ENCODE measurements at regions of chr4 and their contacts with region 1.

Region 1: GRCh38 chr4:171993247-171993646 is 180.0 kb downstream of the GALNTL6 start:
- DNase-seq: no peak
- H3K4me3 ChIP-seq: no peak overlapping the region
- H3K27ac ChIP-seq: no peak overlapping the region
- H3K4me1 ChIP-seq: no peaks in the 10 kb centered on the region
- H3K27me3 ChIP-seq: no peaks in the 10 kb centered on the region
- CTCF ChIP-seq: no peak
- EP300 ChIP-seq: no peak
- POLR2A ChIP-seq: no peak

Region 2: DNA sequence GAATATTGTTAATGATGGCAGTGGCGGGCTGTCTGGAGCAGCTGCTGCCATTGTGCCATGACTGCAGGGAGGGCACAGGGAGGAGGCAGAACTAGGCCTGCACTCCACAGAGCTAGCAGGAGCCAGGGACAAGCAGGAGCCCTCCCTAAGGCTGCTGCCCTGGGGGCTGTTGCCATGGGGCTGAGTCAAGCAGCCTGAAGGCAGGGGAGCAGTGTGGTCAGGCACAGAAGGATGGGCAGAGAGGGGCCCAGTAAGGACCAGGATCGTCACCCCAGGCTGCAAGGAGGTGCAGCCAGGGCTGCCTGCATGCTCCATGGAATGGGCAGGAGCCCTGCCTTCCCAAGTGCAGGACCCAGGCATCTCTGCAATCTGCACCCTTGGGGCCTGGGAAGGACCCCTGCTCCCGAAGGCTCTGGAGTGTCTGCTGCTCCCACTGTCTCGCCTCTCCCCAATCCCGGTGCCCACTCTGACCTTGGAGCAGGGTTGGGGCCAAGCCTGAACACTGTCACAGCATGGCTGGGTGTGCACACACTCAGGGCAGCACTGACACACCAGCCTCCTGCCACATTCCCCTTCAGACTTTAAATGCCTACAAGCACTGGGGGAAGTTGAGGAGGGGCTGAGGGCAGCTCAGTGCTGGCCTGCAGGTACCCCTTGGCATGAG is 278.3 kb before region 1 on chr4:
- in situ Hi-C with region 1: no loop called
- intact Hi-C with region 1: no loop called
- DNase-seq: no peak
- H3K4me3 ChIP-seq: no peak overlapping the region
- H3K27ac ChIP-seq: no peak overlapping the region
- H3K4me1 ChIP-seq: no peaks in the 10 kb centered on the region
- H3K27me3 ChIP-seq: no peaks in the 10 kb centered on the region
- CTCF ChIP-seq: no peak
- EP300 ChIP-seq: no peak
- POLR2A ChIP-seq: no peak

Region 3: GRCh38 chr4:171924746-171925376 is 68.4 kb before region 1 on chr4:
- in situ Hi-C with region 1: no loop called
- intact Hi-C with region 1: loop called (anchors 2 kb)
- DNase-seq: no peak
- H3K4me3 ChIP-seq: no peak overlapping the region
- H3K27ac ChIP-seq: no peak overlapping the region
- H3K4me1 ChIP-seq: no peaks in the 10 kb centered on the region
- H3K27me3 ChIP-seq: no peaks in the 10 kb centered on the region
- CTCF ChIP-seq: no peak
- EP300 ChIP-seq: no peak
- POLR2A ChIP-seq: no peak

Region 4: DNA sequence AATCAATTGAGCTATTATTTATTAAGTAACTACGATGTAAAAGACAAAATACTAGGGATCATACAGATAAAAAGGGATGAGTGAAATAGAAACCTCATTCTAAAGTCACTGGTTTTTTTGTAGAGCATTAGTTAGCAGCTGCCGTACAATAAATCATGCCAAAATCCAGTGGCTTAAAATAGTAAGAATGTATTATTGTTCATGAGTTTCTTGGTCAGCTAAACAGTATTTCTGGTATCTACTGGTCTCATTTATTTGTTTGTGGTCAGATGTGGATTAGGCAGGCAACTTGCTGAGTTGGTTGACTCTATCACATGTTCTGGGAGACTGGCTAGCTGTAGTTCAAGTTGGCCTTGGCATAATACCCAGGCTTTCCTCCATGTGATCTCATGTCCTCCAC is 487.2 kb after region 1 on chr4:
- in situ Hi-C with region 1: no loop called
- intact Hi-C with region 1: no loop called
- DNase-seq: no peak
- H3K4me3 ChIP-seq: no peak overlapping the region
- H3K27ac ChIP-seq: no peak overlapping the region
- H3K4me1 ChIP-seq: no peaks in the 10 kb centered on the region
- H3K27me3 ChIP-seq: no peaks in the 10 kb centered on the region
- CTCF ChIP-seq: no peak
- EP300 ChIP-seq: no peak
- POLR2A ChIP-seq: no peak

Region 5: GRCh38 chr4:172736046-172736445 is 742.8 kb after region 1 on chr4:
- in situ Hi-C with region 1: no loop called
- intact Hi-C with region 1: loop called (anchors 5 kb)
- DNase-seq: no peak
- H3K4me3 ChIP-seq: no peak overlapping the region
- H3K27ac ChIP-seq: no peak overlapping the region
- H3K4me1 ChIP-seq: no peaks in the 10 kb centered on the region
- H3K27me3 ChIP-seq: no peaks in the 10 kb centered on the region
- CTCF ChIP-seq: no peak
- EP300 ChIP-seq: no peak
- POLR2A ChIP-seq: no peak

Measured in transverse colon (tissue), 4 donors.